ENCODE measurements at regions of chr5 and their contacts with region 1.

Region 1: GRCh38 chr5:50440651-50441492 is at the start of gene EMB:
- DNase-seq: peak; percentile 84
- H3K4me3 Mint-ChIP-seq: peak within 1 kb of the TSS; percentile 89
- H3K27ac Mint-ChIP-seq: peak within 1 kb of the TSS; percentile 96
- H3K4me1 Mint-ChIP-seq: peaks cover 56% of the 10 kb centered on the region
- H3K27me3 Mint-ChIP-seq: no peaks in the 10 kb centered on the region
- total RNA-seq, gene EMB: 41.4 to 43.7 TPM

Region 2: DNA sequence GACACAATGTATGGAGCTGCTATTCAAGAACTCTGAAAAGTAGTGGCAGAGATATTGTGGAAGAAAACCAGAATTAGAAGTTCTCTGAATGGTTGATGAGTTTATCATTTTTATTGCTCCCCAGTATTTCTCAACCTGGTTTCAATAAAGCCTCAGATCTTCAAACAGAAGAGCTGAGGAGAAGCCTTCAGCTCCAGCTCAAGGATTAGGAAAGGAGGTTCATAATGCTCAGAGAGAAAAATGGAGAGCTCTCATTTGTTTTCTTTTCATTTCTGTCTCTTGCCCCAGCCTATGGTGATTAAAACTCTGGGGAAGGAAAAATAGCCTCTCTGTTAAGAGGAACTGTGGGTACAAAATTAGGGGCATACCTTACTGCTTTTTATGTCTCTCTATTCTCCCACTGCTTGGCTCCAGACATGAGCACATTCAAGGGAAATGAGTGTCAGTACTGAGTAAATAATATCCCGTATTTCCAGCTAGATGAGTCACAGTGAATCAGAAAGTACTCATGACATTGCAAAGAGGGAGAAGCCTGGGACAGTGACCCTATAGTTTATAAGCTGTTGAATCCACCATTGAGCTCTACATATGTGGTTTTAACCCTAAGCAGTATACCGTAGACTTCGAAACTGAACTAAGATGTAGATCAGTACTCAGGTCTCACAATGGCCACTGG is 137.9 kb before region 1 on chr5:
- CTCF ChIA-PET with region 1: no interaction called
- intact Hi-C with region 1: no loop called
- DNase-seq: no peak
- H3K4me3 Mint-ChIP-seq: no peak overlapping the region
- H3K27ac Mint-ChIP-seq: no peak overlapping the region
- H3K4me1 Mint-ChIP-seq: no peaks in the 10 kb centered on the region
- H3K27me3 Mint-ChIP-seq: peaks cover 2% of the 10 kb centered on the region

Region 3: DNA sequence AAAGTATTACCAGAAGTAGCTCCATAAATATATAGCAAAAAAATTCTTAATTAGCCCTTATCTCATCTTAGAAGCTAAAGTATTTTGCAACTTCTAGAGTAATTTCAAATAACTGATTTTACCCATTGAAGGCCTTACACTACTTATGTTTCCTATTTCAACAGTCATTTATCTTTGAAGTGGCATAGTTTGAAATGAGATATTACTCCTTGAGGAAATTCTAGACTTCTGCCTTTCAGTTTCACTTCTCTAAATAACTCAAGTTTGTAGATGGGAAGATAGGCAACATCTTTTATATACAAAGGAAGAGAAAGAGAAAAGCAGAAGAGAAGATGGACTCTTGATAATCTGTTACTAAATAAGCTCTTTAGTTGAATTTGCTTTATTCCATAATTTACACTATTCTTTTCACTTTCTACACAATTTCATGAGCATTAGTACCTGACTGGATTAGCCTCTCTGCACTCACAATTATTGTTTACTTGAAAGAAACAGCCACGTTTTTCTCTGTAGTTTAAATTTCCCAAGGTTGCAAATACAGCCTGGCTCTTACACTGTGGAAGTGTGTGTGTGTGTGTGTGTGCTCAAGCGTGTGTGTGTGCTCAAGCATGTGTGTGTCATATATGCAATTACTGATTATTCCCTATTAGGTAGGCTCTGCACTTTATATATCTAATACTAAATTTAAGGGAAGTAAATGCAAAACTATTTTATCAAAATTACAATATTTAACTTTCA is 60.8 kb after region 1 on chr5:
- CTCF ChIA-PET with region 1: no interaction called
- intact Hi-C with region 1: loop called (anchors 5 kb)
- DNase-seq: no peak
- H3K4me3 Mint-ChIP-seq: no peak overlapping the region
- H3K27ac Mint-ChIP-seq: no peak overlapping the region
- H3K4me1 Mint-ChIP-seq: peaks cover 11% of the 10 kb centered on the region
- H3K27me3 Mint-ChIP-seq: no peaks in the 10 kb centered on the region

Region 4: GRCh38 chr5:50547303-50547702 is 106.4 kb after region 1 on chr5:
- CTCF ChIA-PET with region 1: no interaction called
- intact Hi-C with region 1: no loop called
- DNase-seq: no peak
- H3K4me3 Mint-ChIP-seq: no peak overlapping the region
- H3K27ac Mint-ChIP-seq: no peak overlapping the region
- H3K4me1 Mint-ChIP-seq: peaks cover 2% of the 10 kb centered on the region
- H3K27me3 Mint-ChIP-seq: no peaks in the 10 kb centered on the region